ENCODE measurements at regions of chr4 and their contacts with region 1.

Region 1: DNA sequence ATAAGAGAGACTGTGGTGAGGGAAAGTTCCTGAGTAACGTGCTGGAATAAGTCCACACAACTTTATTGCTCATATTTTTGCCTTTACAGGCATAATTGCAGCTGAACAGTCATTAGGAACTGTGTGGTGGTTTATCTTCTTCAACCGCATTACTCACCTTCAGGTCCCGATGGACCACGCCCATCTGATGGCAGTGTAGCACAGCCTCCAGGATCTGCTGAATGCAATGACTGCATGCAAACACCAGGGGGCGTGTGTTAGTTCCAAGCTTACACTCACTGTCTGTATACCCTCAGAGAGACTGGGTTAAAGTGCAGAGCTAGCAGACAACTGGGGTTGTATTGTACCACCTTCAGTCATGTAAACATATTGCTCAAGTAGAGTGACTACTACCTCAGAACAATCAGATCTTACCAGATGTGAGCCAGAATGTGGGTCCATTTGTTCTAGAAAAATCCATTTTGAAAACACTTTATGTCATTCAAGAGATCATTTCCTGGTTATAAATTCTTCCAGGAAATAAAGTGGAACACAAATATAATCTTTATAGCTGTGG is 214.0 kb downstream of the CAMK2D start:
- DNase-seq: peak; percentile 88 to 97 (median 93)
- H3K4me3 ChIP-seq: no peak overlapping the region
- H3K27ac ChIP-seq: peak overlapping the region in 2 of 5 donors; percentile 46 to 48
- H3K4me1 ChIP-seq: peaks cover 0 to 6% of the 10 kb centered on the region in 2 donors
- H3K27me3 ChIP-seq: no peaks in the 10 kb centered on the region
- CTCF ChIP-seq: peak; percentile 96 to 98 (median 96)
- POLR2A ChIP-seq: no peak

Region 2: GRCh38 chr4:113179996-113180395 is 367.6 kb before region 1 on chr4:
- intact Hi-C with region 1: no loop called
- DNase-seq: no peak
- H3K4me3 ChIP-seq: no peak overlapping the region
- H3K27ac ChIP-seq: no peak overlapping the region
- H3K4me1 ChIP-seq: peaks cover 0 to 18% of the 10 kb centered on the region in 2 donors
- H3K27me3 ChIP-seq: no peaks in the 10 kb centered on the region
- CTCF ChIP-seq: no peak
- POLR2A ChIP-seq: no peak

Region 3: GRCh38 chr4:113394730-113395530 is 152.6 kb before region 1 on chr4:
- intact Hi-C with region 1: loop called in 1 of 2 experiments (anchors 5 kb)
- DNase-seq: peak; percentile 28 to 75 (median 70)
- H3K4me3 ChIP-seq: no peak overlapping the region
- H3K27ac ChIP-seq: no peak overlapping the region
- H3K4me1 ChIP-seq: no peaks in the 10 kb centered on the region
- H3K27me3 ChIP-seq: no peaks in the 10 kb centered on the region
- CTCF ChIP-seq: peak; percentile 89 to 93 (median 92)
- POLR2A ChIP-seq: no peak

Region 4: GRCh38 chr4:113684534-113685091 is 137.0 kb after region 1 on chr4:
- intact Hi-C with region 1: loop called in 1 of 2 experiments (anchors 10 kb)
- DNase-seq: peak; percentile 35 to 91 (median 66)
- H3K4me3 ChIP-seq: no peak overlapping the region
- H3K27ac ChIP-seq: peak overlapping the region in 4 of 5 donors; percentile 4 to 50 (median 39)
- H3K4me1 ChIP-seq: peaks cover 0 to 15% of the 10 kb centered on the region in 2 donors
- H3K27me3 ChIP-seq: no peaks in the 10 kb centered on the region
- CTCF ChIP-seq: peak; percentile 28 to 57 (median 45)
- POLR2A ChIP-seq: no peak